Sciatic nerve (tissue), 2 donors: ENCODE measurements at regions of chr1 and their contacts with region 1.

Region 1: GRCh38 chr1:116345843-116346242 is 27.2 kb upstream of the ATP1A1 start:
- DNase-seq: no peak
- ATAC-seq: no peak

Region 2: DNA sequence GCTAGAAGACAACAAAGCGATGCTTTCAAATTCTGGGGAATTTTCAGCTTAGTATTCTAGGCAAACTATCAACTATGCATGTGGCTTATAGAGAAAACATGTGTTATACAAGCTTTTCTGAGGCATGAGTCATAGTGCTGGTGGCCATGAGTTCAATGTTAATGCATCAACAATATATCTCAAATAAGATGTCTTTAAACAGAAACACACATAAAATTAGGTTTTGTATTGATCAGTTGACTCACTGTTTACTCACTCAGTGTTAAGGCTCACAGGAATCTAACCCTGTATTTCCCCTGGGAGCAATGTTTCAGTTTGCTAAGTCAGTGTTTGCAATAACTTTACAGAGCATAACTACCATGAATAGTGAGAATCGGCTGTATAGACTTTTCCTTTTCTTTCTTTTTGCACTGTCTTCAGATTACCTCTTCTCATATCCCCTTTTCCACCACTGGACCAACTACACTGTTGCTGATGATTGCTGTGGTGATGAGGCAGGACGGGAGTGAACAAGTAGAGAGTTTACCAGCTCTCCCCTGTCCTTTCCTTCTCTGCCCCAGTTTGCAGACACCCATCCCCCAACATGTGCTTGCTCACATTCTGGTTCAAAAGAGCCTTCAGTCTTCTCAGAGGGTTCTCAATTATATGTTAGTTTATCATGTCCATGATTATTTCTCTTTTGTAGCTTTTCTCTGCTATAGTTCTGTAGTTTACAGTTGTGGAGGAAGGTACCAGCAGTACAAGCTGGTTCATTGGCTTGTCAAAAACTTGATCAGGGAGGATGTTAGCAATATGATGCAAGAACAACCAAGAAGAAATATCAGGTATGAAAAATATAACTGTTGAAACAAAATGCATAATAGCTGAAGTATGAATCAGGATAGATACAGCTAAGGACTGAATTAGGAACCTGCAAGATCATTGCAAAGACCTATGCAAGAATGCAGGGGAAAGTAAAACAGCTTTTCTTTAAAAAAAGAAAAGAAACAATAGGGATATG is 432.3 kb after region 1 on chr1:
- intact Hi-C with region 1: loop called (anchors 5 kb)
- DNase-seq: no peak
- ATAC-seq: no peak